MCF 10A (cell line): ENCODE measurements at regions of chr1 and their contacts with region 1.

Region 1: DNA sequence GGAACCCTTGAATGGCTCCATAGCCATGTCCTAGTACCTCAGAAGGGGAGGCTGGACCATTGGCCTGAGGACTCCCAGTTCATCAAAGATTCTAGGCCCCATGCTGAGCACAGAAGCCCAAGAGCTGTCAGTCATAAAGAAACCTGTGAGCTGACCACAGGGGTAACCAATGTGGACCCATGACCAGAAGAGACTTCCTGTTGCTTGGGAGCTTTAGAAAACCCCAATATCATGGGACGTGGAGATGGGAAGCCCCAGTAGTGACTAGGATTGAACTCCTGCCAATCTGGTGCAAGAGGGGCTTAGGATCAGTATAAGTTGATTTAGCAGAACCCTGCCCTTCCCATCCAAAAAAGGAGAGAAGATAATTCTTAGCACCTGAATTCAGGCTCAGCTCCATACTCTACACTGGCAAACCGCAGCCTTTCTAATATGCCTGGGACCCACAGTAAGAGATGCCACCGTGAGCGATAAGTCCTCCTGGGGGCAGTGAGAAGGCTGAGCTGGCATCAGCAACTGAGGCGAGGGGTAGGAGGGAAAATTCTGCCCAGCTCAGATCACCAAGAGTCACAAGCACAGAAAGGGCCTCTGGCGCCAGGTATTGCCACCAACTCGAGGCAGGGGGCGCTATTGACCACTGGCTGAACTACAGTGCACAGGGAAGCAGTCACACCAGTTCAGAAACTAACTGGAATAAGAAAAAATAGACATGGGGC is 108.9 kb downstream of the CAPN8 start:
- DNase-seq: peak; percentile 87
- H3K4me3 Mint-ChIP-seq: no peak overlapping the region
- H3K27ac Mint-ChIP-seq: no peak overlapping the region
- H3K4me1 Mint-ChIP-seq: no peaks in the 10 kb centered on the region
- H3K27me3 Mint-ChIP-seq: no peaks in the 10 kb centered on the region
- CTCF ChIP-seq: peak; percentile 97

Region 2: GRCh38 chr1:223269006-223269405 is 287.6 kb before region 1 on chr1:
- CTCF ChIA-PET with region 1: no interaction called
- POLR2A ChIA-PET with region 1: no interaction called
- intact Hi-C with region 1: no loop called
- DNase-seq: no peak
- H3K4me3 Mint-ChIP-seq: no peak overlapping the region
- H3K27ac Mint-ChIP-seq: no peak overlapping the region
- H3K4me1 Mint-ChIP-seq: no peaks in the 10 kb centered on the region
- H3K27me3 Mint-ChIP-seq: no peaks in the 10 kb centered on the region
- CTCF ChIP-seq: no peak

Region 3: GRCh38 chr1:223323491-223324484 is 232.8 kb before region 1 on chr1:
- CTCF ChIA-PET with region 1: no interaction called
- POLR2A ChIA-PET with region 1: no interaction called
- intact Hi-C with region 1: no loop called
- DNase-seq: no peak
- H3K4me3 Mint-ChIP-seq: no peak overlapping the region
- H3K27ac Mint-ChIP-seq: no peak overlapping the region
- H3K4me1 Mint-ChIP-seq: no peaks in the 10 kb centered on the region
- H3K27me3 Mint-ChIP-seq: peaks cover 16% of the 10 kb centered on the region
- CTCF ChIP-seq: no peak

Region 4: GRCh38 chr1:223363856-223364684 is 192.5 kb before region 1 on chr1 and contains the start of gene SUSD4:
- CTCF ChIA-PET with region 1: interaction called, 10 read pairs
- POLR2A ChIA-PET with region 1: no interaction called
- intact Hi-C with region 1: no loop called
- DNase-seq: no peak
- H3K4me3 Mint-ChIP-seq: peak within 1 kb of the TSS; percentile 69
- H3K27ac Mint-ChIP-seq: no peak within 1 kb of the TSS
- H3K4me1 Mint-ChIP-seq: no peaks in the 10 kb centered on the region
- H3K27me3 Mint-ChIP-seq: peaks cover 77% of the 10 kb centered on the region
- CTCF ChIP-seq: no peak
- total RNA-seq, gene SUSD4: 0.42 and 2.3 TPM in 2 replicates

Region 5: GRCh38 chr1:223611936-223612335 is 55.4 kb after region 1 on chr1:
- CTCF ChIA-PET with region 1: interaction called, 87 read pairs
- POLR2A ChIA-PET with region 1: interaction called, 19 read pairs
- intact Hi-C with region 1: no loop called
- DNase-seq: no peak
- H3K4me3 Mint-ChIP-seq: no peak overlapping the region
- H3K27ac Mint-ChIP-seq: no peak overlapping the region
- H3K4me1 Mint-ChIP-seq: no peaks in the 10 kb centered on the region
- H3K27me3 Mint-ChIP-seq: no peaks in the 10 kb centered on the region
- CTCF ChIP-seq: no peak

Region 6: GRCh38 chr1:223628233-223629125 is 71.9 kb after region 1 on chr1:
- CTCF ChIA-PET with region 1: interaction called, 12 read pairs
- POLR2A ChIA-PET with region 1: no interaction called
- intact Hi-C with region 1: no loop called
- DNase-seq: peak; percentile 72
- H3K4me3 Mint-ChIP-seq: no peak overlapping the region
- H3K27ac Mint-ChIP-seq: no peak overlapping the region
- H3K4me1 Mint-ChIP-seq: no peaks in the 10 kb centered on the region
- H3K27me3 Mint-ChIP-seq: no peaks in the 10 kb centered on the region
- CTCF ChIP-seq: peak; percentile 85

Region 7: GRCh38 chr1:223670458-223671168 is 114.0 kb after region 1 on chr1:
- CTCF ChIA-PET with region 1: interaction called, 10 read pairs
- POLR2A ChIA-PET with region 1: no interaction called
- intact Hi-C with region 1: no loop called
- DNase-seq: peak; percentile 87
- H3K4me3 Mint-ChIP-seq: no peak overlapping the region
- H3K27ac Mint-ChIP-seq: no peak overlapping the region
- H3K4me1 Mint-ChIP-seq: peaks cover 22% of the 10 kb centered on the region
- H3K27me3 Mint-ChIP-seq: no peaks in the 10 kb centered on the region
- CTCF ChIP-seq: peak; percentile 97

Region 8: DNA sequence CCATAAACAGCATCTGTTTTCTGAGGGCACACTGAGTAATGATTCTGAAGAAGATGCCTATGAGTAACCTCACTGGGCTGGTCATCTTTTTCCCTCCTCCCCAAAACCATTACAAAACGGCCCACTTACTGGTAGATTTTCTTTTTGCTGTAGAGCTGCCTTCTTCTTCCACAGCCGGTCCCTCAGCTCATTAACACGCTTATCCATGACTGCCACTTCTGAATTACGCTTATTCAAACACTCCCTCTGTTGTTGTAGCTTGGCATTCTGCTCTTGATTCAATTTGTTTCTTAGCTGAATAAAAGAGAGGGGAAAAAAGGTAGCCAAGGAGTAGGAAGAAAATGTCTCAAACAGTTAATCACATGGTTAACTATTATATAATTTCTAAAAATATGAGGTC is 246.0 kb after region 1 on chr1:
- CTCF ChIA-PET with region 1: no interaction called
- POLR2A ChIA-PET with region 1: no interaction called
- intact Hi-C with region 1: no loop called
- DNase-seq: no peak
- H3K4me3 Mint-ChIP-seq: no peak overlapping the region
- H3K27ac Mint-ChIP-seq: peak overlapping the region; percentile 50
- H3K4me1 Mint-ChIP-seq: no peaks in the 10 kb centered on the region
- H3K27me3 Mint-ChIP-seq: no peaks in the 10 kb centered on the region
- CTCF ChIP-seq: no peak

Region 9: DNA sequence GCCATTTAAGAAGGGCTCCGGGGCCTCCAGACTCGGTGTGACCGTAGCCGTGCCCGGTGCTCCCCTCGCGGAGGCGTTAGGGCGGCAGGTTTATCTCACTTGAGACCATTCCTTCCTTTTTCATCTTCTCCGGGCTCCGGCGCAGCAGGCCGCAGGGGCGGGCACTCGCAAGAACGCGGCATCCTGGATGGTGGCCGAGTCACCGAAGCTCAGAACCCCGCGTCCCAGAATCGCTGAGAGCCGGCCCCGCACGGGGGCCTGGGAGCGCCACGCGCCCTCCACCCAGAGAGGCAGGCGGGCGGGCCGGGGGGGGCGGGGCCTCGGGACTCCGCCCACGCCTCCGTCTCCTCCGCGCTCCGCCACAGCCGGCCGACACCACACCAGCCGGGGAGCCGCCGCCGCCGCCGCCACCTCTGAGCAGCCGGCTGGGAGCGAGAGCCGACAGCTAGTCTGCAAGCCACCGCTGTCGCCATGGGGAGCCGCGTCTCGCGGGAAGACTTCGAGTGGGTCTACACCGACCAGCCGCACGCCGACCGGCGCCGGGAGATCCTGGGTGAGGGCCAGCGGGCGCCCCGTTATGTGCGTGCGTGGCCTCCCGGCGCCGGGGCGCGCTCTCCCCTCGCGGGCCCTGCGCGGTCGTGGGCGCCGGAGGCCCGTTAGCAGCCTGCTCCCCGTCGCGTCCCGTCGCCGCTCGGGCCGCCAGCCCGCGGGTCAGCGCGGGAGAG is 626.5 kb after region 1 on chr1 and contains the start of gene DEGS1:
- CTCF ChIA-PET with region 1: no interaction called
- POLR2A ChIA-PET with region 1: no interaction called
- intact Hi-C with region 1: no loop called
- DNase-seq: peak; percentile 94
- H3K4me3 Mint-ChIP-seq: peak within 1 kb of the TSS; percentile 85
- H3K27ac Mint-ChIP-seq: peak within 1 kb of the TSS; percentile 91
- H3K4me1 Mint-ChIP-seq: peaks cover 30% of the 10 kb centered on the region
- H3K27me3 Mint-ChIP-seq: no peaks in the 10 kb centered on the region
- CTCF ChIP-seq: no peak
- total RNA-seq, gene DEGS1: 99.1 and 118 TPM in 2 replicates